Head of caudate nucleus (tissue), 42 donors: ENCODE measurements at regions of chr2 and their contacts with region 1.

Region 1: DNA sequence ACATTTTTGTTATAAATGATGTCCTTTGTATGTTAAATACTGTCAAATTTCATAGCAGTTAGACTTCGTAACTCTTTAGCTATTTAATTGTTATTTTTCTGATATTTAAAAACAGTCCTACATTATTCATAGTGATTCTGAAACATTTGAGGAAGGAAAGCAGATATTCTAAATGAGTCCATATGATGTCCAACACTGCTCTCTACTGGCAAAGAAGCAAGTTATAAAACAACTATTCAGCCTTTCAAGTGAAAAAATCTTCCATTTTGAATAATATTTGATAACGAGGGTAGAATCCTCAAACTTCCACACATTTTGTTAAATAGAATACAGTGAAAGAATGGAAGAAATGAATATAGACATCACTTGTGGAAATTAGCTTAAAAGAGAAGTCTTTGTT is 220.8 kb downstream of the GULP1 start:
- DNase-seq: peak in 1 of 42 donors; percentile 19

Region 2: DNA sequence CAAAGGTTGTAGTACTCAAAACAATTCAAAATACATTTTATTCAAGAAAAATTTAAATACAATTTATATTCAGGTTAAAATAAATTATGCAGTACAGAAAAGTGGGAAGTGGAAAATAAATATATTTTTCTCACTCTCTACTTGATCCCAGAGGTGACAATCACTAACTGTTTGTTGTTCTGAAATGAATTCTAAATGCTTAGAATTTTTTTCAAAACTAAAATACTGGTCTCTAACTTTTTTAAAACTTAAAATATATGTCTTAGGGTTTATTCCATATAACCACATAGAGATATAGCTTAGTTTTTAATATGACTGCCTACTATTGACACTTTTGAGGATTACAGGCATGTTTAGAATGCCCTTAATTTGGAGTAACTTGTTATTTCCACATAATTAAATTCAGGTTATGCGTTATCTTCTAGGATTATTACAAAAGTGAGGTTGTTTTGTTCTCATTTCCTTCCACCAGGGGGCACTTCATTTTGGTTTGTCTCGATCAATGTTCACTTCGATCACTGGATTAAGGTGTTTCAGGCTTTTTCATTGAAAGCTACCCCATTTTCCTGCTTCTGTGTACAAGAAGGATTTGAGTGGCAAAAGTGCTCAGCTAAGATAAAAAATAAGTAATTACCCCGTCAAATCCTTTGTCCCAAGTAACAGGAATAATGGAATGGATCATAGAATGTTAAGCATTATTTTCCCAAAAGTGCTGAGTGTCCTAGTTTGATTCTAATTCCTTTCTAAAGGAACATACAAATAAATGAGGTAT is 931.1 kb before region 1 on chr2:
- intact Hi-C with region 1: loop called (anchors 10 kb)
- DNase-seq: peak in 17 of 42 donors; percentile 5 to 64 (median 24)

Region 3: DNA sequence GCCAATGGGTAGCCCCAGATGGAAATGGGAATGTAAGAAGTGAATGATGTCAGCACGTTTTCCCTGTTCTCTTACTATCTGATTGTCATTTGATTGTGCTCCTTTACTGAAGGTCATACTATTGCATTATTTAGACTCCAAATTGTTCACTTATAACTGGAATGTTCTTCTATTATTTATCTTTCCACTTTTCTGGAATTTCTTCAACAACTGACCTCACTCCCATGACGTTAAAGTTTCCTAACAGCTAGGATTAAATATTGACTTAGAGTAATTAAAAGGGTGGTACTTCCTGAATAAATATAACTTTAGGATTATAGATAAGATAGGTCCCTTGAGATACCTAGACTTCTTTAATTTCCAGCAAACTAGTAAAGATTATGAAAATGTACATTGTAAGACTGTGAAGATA is 231.6 kb before region 1 on chr2:
- intact Hi-C with region 1: no loop called
- DNase-seq: no peak

Region 4: GRCh38 chr2:188734691-188735090 is 222.2 kb after region 1 on chr2:
- intact Hi-C with region 1: no loop called
- DNase-seq: no peak